CD8-positive, alpha-beta T cell (primary cell): ENCODE measurements at regions of chr17 and their contacts with region 1.

Region 1: DNA sequence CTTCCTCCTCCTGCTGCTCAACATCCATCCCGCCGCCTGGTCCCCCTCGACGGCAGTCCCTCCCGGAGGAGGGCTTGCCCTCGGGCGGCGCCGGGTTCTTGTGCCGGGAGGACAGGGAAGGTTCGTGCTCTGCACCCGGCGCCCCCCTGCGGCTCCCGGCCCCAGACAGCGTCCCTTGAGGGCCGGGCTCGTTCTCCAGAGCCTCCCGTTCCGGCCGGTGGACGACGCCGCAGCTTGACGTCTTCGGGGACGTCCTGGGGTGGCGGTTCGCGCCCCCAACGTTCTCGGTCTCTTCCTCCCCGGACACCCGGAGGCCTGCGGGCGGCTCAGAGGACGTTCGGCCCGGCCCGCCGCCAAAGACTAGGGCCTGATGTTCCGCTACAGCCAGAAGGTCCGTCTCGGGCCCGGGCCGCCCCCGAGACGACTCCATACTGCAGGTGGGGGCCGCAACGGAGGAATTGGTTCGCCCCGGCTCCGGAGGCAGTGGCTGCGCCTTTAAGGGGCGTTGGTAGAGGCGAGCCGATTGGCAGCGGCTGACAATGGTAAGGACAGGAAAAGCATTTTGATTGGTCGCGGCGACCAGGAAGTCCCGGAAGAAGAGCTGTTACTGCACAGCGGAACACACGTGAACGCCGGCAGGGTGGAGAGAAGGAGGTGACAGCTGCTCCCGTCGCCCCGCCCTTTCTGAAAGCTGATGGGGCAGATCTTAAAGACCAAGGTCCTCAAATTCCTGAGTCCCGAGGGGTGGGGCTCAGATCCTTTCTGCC is at the start of gene BORCS6:
- DNase-seq: peak; percentile 87 to 99 (median 93)
- ATAC-seq: peak; percentile 69
- H3K4me3 ChIP-seq: peak within 1 kb of the TSS; percentile 95 to 98
- H3K4me3 Mint-ChIP-seq: peak within 1 kb of the TSS; percentile 1
- H3K27ac ChIP-seq: peak within 1 kb of the TSS; percentile 63 to 93
- H3K27ac Mint-ChIP-seq: peak within 1 kb of the TSS; percentile 94
- H3K4me1 ChIP-seq: peaks cover 38% of the 10 kb centered on the region
- H3K4me1 Mint-ChIP-seq: peaks cover 13% of the 10 kb centered on the region
- H3K27me3 ChIP-seq: no peaks in the 10 kb centered on the region
- H3K27me3 Mint-ChIP-seq: no peaks in the 10 kb centered on the region
- CTCF ChIP-seq: no peak
- total RNA-seq, gene BORCS6: 6.1 to 6.7 TPM

Region 2: DNA sequence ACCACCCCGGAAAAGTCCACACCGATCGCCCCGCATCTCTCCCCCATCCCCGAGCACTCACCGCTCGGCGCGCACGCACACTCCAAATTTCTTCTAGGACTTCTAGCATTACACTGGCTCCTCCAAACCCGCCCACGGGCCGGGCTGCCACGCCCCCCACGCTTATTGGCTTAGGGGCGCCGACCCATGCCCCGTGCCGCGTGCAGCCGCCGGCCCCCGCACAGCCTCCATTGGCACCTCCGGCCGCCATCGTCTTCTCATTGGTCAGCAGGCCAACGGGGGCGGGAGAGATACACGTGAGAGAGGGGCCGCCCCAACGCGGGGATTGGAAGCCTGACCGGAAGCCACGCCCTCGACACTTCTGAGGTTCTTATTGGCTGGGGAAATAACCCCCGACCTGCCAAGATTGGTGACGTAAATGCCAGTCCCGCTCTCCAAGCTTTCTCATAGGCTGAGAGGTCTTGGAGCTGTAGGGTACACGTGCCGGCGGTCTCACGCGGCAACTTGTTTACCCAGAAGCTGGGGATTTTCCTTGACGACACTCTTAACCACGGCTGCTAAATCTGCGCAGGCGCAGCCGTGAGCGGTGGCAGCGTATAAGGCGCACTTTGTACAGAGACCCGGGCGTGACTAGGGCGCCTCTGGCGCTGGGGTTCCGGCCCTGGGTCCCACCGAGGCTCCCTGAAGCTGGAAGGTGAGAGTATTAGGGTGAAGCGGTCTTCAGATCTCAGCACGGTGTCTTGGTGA is 33.5 kb before region 1 on chr17:
- CTCF ChIA-PET with region 1: interaction called, 183 read pairs
- POLR2A ChIA-PET with region 1: interaction called, 32 read pairs
- intact Hi-C with region 1: loop called (anchors 1 kb)
- DNase-seq: peak; percentile 100
- ATAC-seq: peak; percentile 68
- H3K4me3 ChIP-seq: peak overlapping the region; percentile 82 to 90
- H3K4me3 Mint-ChIP-seq: no peak overlapping the region
- H3K27ac ChIP-seq: peak overlapping the region; percentile 100
- H3K27ac Mint-ChIP-seq: no peak overlapping the region
- H3K4me1 ChIP-seq: peaks cover 77% of the 10 kb centered on the region
- H3K4me1 Mint-ChIP-seq: peaks cover 68% of the 10 kb centered on the region
- H3K27me3 ChIP-seq: no peaks in the 10 kb centered on the region
- H3K27me3 Mint-ChIP-seq: no peaks in the 10 kb centered on the region
- CTCF ChIP-seq: no peak

Region 3: GRCh38 chr17:8173056-8173870 is 16.6 kb before region 1 on chr17:
- CTCF ChIA-PET with region 1: interaction called, 6 read pairs
- POLR2A ChIA-PET with region 1: interaction called, 40 read pairs
- intact Hi-C with region 1: loop called (anchors 1 kb)
- DNase-seq: peak in 7 of 9 experiments; percentile 61 to 96 (median 80)
- ATAC-seq: peak; percentile 84
- H3K4me3 ChIP-seq: peak overlapping the region; percentile 39 to 46
- H3K4me3 Mint-ChIP-seq: peak overlapping the region; percentile 83
- H3K27ac ChIP-seq: peak overlapping the region; percentile 94 to 98
- H3K27ac Mint-ChIP-seq: peak overlapping the region; percentile 100
- H3K4me1 ChIP-seq: peaks cover 40% of the 10 kb centered on the region
- H3K4me1 Mint-ChIP-seq: peaks cover 50% of the 10 kb centered on the region
- H3K27me3 ChIP-seq: no peaks in the 10 kb centered on the region
- H3K27me3 Mint-ChIP-seq: no peaks in the 10 kb centered on the region
- CTCF ChIP-seq: no peak

Region 4: DNA sequence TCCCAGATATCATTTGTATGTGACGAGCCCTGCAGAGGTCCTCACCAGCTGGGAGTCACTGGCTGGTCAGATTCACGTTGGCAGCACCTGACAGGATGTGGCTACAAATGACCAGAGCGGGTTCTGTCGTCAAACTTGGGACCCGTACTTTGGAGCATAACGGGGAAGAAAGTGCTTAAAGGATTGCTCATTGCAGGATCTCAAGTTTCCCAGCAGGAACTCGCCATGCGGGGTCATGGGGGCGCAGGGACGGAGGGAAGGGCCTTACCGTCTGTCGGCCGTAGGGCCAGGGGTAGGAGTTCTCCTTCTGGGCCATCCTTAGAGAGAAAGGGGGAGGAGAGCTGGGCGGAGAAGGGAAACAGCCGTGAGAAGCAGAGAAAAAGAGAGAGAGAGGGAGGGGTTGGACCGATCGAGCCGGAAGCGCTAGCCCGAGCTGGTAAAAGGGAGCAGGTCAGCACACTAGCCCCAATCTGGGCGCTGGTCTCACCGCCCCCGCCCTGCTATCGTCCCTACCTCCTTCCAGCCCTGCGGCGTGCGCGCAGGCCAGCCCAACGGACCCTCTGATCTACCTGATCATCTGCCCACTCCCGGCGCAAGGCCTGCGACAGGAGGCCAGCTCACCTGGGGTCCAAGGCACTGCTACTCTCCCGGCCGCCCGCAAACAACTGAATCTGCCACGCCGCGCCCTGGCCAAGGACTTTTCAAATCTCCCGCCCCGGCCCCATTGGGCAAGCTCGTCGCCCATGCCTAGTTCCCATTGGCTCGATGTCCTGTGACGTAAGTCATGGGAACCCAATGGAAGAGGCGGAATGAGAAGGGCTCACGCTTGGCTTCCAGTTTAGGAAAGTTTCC is 20.2 kb after region 1 on chr17 and contains the start of gene AURKB:
- CTCF ChIA-PET with region 1: interaction called, 5 read pairs
- POLR2A ChIA-PET with region 1: interaction called, 12 read pairs
- intact Hi-C with region 1: loop called in 1 of 2 experiments (anchors 1 kb)
- DNase-seq: peak; percentile 81 to 98 (median 92)
- ATAC-seq: peak; percentile 100
- H3K4me3 ChIP-seq: peak within 1 kb of the TSS; percentile 64 to 71
- H3K4me3 Mint-ChIP-seq: peak within 1 kb of the TSS; percentile 93
- H3K27ac ChIP-seq: peak within 1 kb of the TSS; percentile 26 to 67
- H3K27ac Mint-ChIP-seq: peak within 1 kb of the TSS; percentile 87
- H3K4me1 ChIP-seq: peaks cover 10% of the 10 kb centered on the region
- H3K4me1 Mint-ChIP-seq: peaks cover 17% of the 10 kb centered on the region
- H3K27me3 ChIP-seq: no peaks in the 10 kb centered on the region
- H3K27me3 Mint-ChIP-seq: no peaks in the 10 kb centered on the region
- CTCF ChIP-seq: no peak
- total RNA-seq, gene AURKB: 0.62 to 1.1 TPM

Region 5: DNA sequence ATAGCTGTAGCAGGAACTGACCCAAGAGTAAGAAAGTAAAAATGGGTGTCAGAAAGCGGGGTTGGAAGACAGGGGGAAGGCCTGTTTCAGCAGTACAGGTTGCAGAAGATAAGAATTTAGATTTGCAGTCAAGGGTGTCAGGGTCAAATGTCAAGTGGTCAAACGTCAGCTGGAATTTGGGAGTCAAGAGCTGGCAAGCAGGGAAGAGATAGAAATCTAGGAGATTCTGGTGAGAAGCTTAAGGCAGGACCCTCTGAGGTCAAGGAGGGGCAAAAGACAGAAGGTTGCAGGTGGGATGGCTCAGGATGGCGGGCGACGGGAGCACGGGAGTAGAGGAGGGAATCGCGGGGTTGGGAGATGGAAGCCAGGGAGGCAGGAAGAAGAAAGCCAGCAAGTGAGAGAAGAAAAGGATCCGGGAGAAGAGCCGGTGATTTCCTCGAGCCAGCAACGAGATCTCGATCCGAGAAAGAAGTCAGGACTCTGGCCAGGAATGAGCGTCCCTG is 105.0 kb after region 1 on chr17:
- CTCF ChIA-PET with region 1: interaction called, 3 read pairs
- POLR2A ChIA-PET with region 1: interaction called, 13 read pairs
- intact Hi-C with region 1: loop called in 1 of 2 experiments (anchors 1 kb)
- DNase-seq: no peak
- ATAC-seq: no peak
- H3K4me3 ChIP-seq: peak overlapping the region; percentile 80 to 98
- H3K4me3 Mint-ChIP-seq: peak overlapping the region; percentile 86
- H3K27ac ChIP-seq: peak overlapping the region; percentile 80 to 87
- H3K27ac Mint-ChIP-seq: peak overlapping the region; percentile 90
- H3K4me1 ChIP-seq: peaks cover 12% of the 10 kb centered on the region
- H3K4me1 Mint-ChIP-seq: peaks cover 30% of the 10 kb centered on the region
- H3K27me3 ChIP-seq: no peaks in the 10 kb centered on the region
- H3K27me3 Mint-ChIP-seq: no peaks in the 10 kb centered on the region
- CTCF ChIP-seq: no peak

Region 6: GRCh38 chr17:8383143-8383822 is 193.4 kb after region 1 on chr17 and contains the start of gene RPL26:
- CTCF ChIA-PET with region 1: no interaction called
- POLR2A ChIA-PET with region 1: no interaction called
- intact Hi-C with region 1: loop called in 1 of 2 experiments (anchors 10 kb)
- DNase-seq: peak; percentile 88 to 98 (median 95)
- ATAC-seq: peak; percentile 89
- H3K4me3 ChIP-seq: peak within 1 kb of the TSS; percentile 70 to 72
- H3K4me3 Mint-ChIP-seq: peak within 1 kb of the TSS; percentile 96
- H3K27ac ChIP-seq: peak within 1 kb of the TSS; percentile 71 to 76
- H3K27ac Mint-ChIP-seq: peak within 1 kb of the TSS; percentile 93
- H3K4me1 ChIP-seq: peaks cover 40% of the 10 kb centered on the region
- H3K4me1 Mint-ChIP-seq: peaks cover 69% of the 10 kb centered on the region
- H3K27me3 ChIP-seq: no peaks in the 10 kb centered on the region
- H3K27me3 Mint-ChIP-seq: no peaks in the 10 kb centered on the region
- CTCF ChIP-seq: peak; percentile 100
- total RNA-seq, gene RPL26: 2,888 to 2,889 TPM